ENCODE measurements at regions of chr21 and their contacts with region 1.

Region 1: GRCh38 chr21:15051644-15052458 is 12.9 kb downstream of the NRIP1 start:
- DNase-seq: no peak
- H3K4me3 Mint-ChIP-seq: peak overlapping the region; percentile 69
- H3K27ac Mint-ChIP-seq: peak overlapping the region; percentile 63
- H3K4me1 Mint-ChIP-seq: peaks cover 77% of the 10 kb centered on the region
- H3K27me3 Mint-ChIP-seq: no peaks in the 10 kb centered on the region

Region 2: GRCh38 chr21:15005391-15005790 is 46.5 kb before region 1 on chr21:
- CTCF ChIA-PET with region 1: no interaction called
- intact Hi-C with region 1: loop called (anchors 1 kb)
- DNase-seq: peak; percentile 25
- H3K4me3 Mint-ChIP-seq: peak overlapping the region; percentile 66
- H3K27ac Mint-ChIP-seq: peak overlapping the region; percentile 42
- H3K4me1 Mint-ChIP-seq: peaks cover 47% of the 10 kb centered on the region
- H3K27me3 Mint-ChIP-seq: no peaks in the 10 kb centered on the region

Region 3: GRCh38 chr21:15221799-15222386 is 170.0 kb after region 1 on chr21:
- CTCF ChIA-PET with region 1: no interaction called
- intact Hi-C with region 1: loop called (anchors 1 kb)
- DNase-seq: peak; percentile 48
- H3K4me3 Mint-ChIP-seq: no peak overlapping the region
- H3K27ac Mint-ChIP-seq: peak overlapping the region; percentile 30
- H3K4me1 Mint-ChIP-seq: peaks cover 29% of the 10 kb centered on the region
- H3K27me3 Mint-ChIP-seq: peaks cover 4% of the 10 kb centered on the region